ENCODE measurements at regions of chr22 and their contacts with region 1.

Region 1: DNA sequence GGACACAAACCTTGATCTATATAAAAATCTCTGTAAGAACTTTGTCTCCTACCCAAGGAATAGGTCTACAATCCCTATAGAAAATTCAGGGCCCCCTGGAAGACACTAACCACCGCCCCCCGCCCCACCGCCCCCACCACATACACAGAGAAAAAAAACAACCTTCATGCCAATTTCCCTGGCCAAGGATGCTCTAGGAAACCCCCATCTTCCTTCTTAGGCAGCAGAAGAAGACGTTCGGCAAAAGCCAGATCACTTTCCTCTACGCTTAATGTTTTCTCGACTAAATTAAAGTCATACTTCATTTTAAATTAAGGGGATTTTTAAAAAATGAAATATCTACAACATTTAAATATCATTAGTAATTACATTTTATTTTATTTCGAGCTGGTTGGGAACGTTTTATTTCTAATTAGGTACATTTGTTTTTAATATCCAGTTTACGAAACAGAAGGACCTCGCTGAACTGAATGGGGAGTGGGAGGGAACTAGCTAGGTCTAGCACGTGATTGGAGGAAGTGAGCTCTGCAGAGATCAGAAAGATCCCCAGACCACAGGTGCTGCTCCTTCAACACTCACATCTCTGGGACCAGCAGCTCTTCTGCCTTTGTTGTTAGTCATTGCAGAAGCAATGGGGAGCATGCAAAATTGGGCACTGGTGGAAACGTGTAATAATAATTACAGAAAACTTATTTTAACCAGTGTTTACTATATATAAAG is 472.3 kb downstream of the MN1 start:
- DNase-seq: no peak
- H3K4me3 Mint-ChIP-seq: no peak overlapping the region
- H3K27ac Mint-ChIP-seq: no peak overlapping the region
- H3K4me1 Mint-ChIP-seq: peaks cover 5% of the 10 kb centered on the region
- H3K27me3 Mint-ChIP-seq: peaks cover 41% of the 10 kb centered on the region
- CTCF ChIP-seq: no peak

Region 2: DNA sequence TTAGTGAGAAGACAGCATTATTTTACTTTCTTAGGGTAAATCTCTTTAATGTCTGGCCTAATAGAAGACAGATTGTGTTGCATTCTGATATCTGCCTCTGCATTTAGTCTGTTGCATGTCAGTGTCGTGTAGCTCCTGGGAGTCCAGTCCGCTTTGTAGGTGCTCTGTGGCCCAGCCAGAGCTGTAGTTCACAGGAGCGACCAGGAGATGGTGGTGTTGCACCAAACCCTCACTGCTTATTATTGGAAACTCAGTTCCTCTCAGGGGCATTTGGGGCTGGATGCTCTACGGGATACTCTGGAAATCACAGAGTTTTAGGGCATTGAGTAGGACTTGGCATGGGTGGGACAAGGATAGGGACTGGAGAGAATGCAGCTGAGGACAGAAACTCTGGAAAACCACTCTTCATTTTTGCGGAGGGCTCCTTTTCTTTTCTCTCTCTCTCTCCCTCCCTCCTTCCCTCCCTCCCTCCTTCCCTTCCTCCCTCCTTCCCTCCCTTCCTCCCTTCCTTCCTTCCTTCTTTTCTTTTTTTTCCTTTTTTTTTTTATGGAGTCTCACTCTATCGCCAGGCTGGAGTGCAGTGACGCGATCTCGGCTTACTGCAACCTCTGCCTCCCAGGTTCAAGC is 650.2 kb before region 1 on chr22:
- CTCF ChIA-PET with region 1: no interaction called
- POLR2A ChIA-PET with region 1: no interaction called
- intact Hi-C with region 1: loop called (anchors 2 kb)
- DNase-seq: peak; percentile 68
- H3K4me3 Mint-ChIP-seq: no peak overlapping the region
- H3K27ac Mint-ChIP-seq: no peak overlapping the region
- H3K4me1 Mint-ChIP-seq: peaks cover 13% of the 10 kb centered on the region
- H3K27me3 Mint-ChIP-seq: no peaks in the 10 kb centered on the region
- CTCF ChIP-seq: peak; percentile 89

Region 3: GRCh38 chr22:26756675-26757293 is 572.5 kb before region 1 on chr22:
- CTCF ChIA-PET with region 1: no interaction called
- POLR2A ChIA-PET with region 1: no interaction called
- intact Hi-C with region 1: loop called (anchors 5 kb)
- DNase-seq: peak; percentile 11
- H3K4me3 Mint-ChIP-seq: no peak overlapping the region
- H3K27ac Mint-ChIP-seq: no peak overlapping the region
- H3K4me1 Mint-ChIP-seq: no peaks in the 10 kb centered on the region
- H3K27me3 Mint-ChIP-seq: no peaks in the 10 kb centered on the region
- CTCF ChIP-seq: peak; percentile 93

Region 4: GRCh38 chr22:26835929-26836528 is 493.3 kb before region 1 on chr22:
- CTCF ChIA-PET with region 1: no interaction called
- POLR2A ChIA-PET with region 1: no interaction called
- intact Hi-C with region 1: loop called (anchors 1 kb)
- DNase-seq: peak; percentile 67
- H3K4me3 Mint-ChIP-seq: no peak overlapping the region
- H3K27ac Mint-ChIP-seq: no peak overlapping the region
- H3K4me1 Mint-ChIP-seq: no peaks in the 10 kb centered on the region
- H3K27me3 Mint-ChIP-seq: peaks cover 73% of the 10 kb centered on the region
- CTCF ChIP-seq: peak; percentile 83

Measured in MCF 10A (cell line).